Activated T-helper 1 cell treated with anti-CD3 and anti-CD28 coated beads, Interleukin-12 subunit alpha, Interleukin-12 subunit beta, Interleukin-2, Interleukin-4 antibody, amounts not matched to agents 30 ng/mL and 10 ng/mL and 1 ng/mL, durations not matched to agents 14 hours and 24 hours and 36 hours (primary cell): ENCODE measurements at regions of chr4 and their contacts with region 1.

Region 1: GRCh38 chr4:21765810-21766407 is 182.7 kb downstream of the KCNIP4 start:
- DNase-seq: no peak
- H3K4me3 Mint-ChIP-seq: no peak overlapping the region
- H3K27ac Mint-ChIP-seq: no peak overlapping the region
- H3K4me1 Mint-ChIP-seq: no peaks in the 10 kb centered on the region
- H3K27me3 Mint-ChIP-seq: no peaks in the 10 kb centered on the region

Region 2: GRCh38 chr4:20773144-20773997 is 992.5 kb before region 1 on chr4:
- intact Hi-C with region 1: loop called (anchors 1 kb)
- DNase-seq: no peak
- H3K4me3 Mint-ChIP-seq: no peak overlapping the region
- H3K27ac Mint-ChIP-seq: no peak overlapping the region
- H3K4me1 Mint-ChIP-seq: no peaks in the 10 kb centered on the region
- H3K27me3 Mint-ChIP-seq: peaks cover 3% of the 10 kb centered on the region

Region 3: DNA sequence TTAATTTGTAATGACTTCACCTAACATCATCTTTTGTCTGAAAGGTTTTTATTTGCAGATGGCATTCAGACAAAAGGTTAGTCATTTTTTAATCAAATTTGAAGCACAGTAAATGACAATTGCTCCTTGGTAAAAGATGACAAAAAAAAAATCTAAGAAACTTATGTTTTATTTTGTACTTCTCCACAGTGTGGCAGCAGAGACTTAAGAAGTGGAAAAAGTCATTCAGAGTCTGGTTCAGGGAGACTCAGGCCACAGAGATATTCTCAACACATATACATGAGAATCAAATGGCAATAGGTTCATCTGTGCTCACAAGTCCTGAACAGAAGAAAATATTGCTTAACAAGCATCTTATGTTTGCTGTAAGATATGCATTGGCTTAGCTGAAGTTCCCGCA is 253.6 kb before region 1 on chr4:
- intact Hi-C with region 1: loop called (anchors 1 kb)
- DNase-seq: no peak
- H3K4me3 Mint-ChIP-seq: no peak overlapping the region
- H3K27ac Mint-ChIP-seq: no peak overlapping the region
- H3K4me1 Mint-ChIP-seq: no peaks in the 10 kb centered on the region
- H3K27me3 Mint-ChIP-seq: peaks cover 1% of the 10 kb centered on the region

Region 4: GRCh38 chr4:21753084-21753760 is 12.7 kb before region 1 on chr4:
- intact Hi-C with region 1: no loop called
- DNase-seq: no peak
- H3K4me3 Mint-ChIP-seq: no peak overlapping the region
- H3K27ac Mint-ChIP-seq: no peak overlapping the region
- H3K4me1 Mint-ChIP-seq: no peaks in the 10 kb centered on the region
- H3K27me3 Mint-ChIP-seq: no peaks in the 10 kb centered on the region